AG04450 (cell line): ENCODE measurements at regions of chr3 and their contacts with region 1.

Region 1: GRCh38 chr3:128969993-128970739 is 23.7 kb downstream of the CFAP92 start:
- DNase-seq: no peak
- H3K4me3 ChIP-seq: no peak overlapping the region
- H3K27ac ChIP-seq: peak overlapping the region; percentile 21
- H3K27me3 ChIP-seq: peaks cover 14% of the 10 kb centered on the region
- CTCF ChIP-seq: peak; percentile 95

Region 2: DNA sequence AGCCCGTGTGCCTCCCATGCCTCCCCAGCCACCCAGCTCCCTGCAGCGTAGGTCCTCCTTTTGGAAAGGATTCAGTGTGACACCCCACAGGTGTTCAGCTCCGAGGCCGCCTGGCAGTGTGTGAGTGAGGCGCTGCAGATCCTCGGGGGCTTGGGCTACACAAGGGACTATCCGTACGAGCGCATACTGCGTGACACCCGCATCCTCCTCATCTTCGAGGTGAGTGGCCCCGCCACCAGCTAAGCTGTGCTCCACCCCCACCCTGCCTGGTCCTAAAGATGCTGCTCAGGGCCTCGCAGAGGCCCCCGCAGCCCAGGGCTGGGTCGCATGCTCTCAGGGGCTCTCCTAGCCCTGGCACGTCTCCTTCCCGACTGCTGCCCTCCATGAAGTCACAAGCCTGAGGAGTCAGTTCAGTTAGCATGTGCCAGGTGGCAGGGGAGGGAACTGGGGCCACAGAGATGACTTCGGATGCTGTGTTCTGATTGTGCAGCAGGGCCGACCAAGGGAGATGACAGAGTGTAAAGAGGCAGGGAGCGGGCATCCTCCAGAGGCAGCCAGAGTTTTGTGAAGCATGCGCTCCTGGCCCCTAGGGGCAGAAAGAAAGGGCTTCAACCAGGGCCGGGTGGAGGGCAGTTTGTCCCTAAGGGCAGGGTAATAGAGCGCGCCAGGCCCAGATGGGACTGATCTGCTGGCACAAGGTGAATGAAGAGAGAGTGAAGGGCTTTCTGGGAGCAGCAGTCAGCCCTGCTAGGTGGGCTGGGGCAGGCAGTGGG is 63.9 kb before region 1 on chr3:
- CTCF ChIA-PET with region 1: no interaction called
- POLR2A ChIA-PET with region 1: no interaction called
- DNase-seq: no peak
- H3K4me3 ChIP-seq: no peak overlapping the region
- H3K27ac ChIP-seq: no peak overlapping the region
- H3K27me3 ChIP-seq: no peaks in the 10 kb centered on the region
- CTCF ChIP-seq: no peak

Region 3: GRCh38 chr3:128993461-128994173 is 23.5 kb after region 1 on chr3 and contains the start of gene CFAP92:
- CTCF ChIA-PET with region 1: interaction called, 18 read pairs
- POLR2A ChIA-PET with region 1: no interaction called
- DNase-seq: no peak
- H3K4me3 ChIP-seq: peak within 1 kb of the TSS; percentile 50
- H3K27ac ChIP-seq: no peak within 1 kb of the TSS
- H3K27me3 ChIP-seq: peaks cover 46% of the 10 kb centered on the region
- CTCF ChIP-seq: no peak
- polyA plus RNA-seq, gene CFAP92: 0.10 TPM in 1 of 2 replicates, not detected in the other

Region 4: DNA sequence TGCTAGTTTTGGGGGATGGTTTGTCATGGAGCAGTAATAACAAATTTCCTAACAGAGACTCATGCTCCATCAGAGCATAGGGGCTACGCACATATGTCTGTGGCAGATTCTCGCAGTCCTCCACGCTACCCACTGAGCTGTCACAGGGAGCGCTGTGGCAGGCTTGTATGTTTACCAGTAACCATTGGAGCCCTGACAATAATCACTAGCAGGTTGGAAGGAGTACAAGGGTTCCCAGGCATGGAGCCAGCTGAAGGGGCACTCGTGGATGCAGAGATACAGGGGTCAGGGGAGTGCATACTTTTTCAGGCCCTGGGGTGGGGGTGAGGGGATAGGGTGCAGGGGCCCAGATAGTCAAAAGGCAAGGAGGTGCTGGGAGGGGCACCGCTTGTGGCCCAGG is 82.5 kb after region 1 on chr3:
- CTCF ChIA-PET with region 1: interaction called, 111 read pairs
- POLR2A ChIA-PET with region 1: interaction called, 3 read pairs
- DNase-seq: no peak
- H3K4me3 ChIP-seq: no peak overlapping the region
- H3K27ac ChIP-seq: no peak overlapping the region
- H3K27me3 ChIP-seq: peaks cover 17% of the 10 kb centered on the region
- CTCF ChIP-seq: no peak

Region 5: GRCh38 chr3:129101370-129102138 is 131.4 kb after region 1 on chr3:
- CTCF ChIA-PET with region 1: interaction called, 17 read pairs
- POLR2A ChIA-PET with region 1: no interaction called
- DNase-seq: no peak
- H3K4me3 ChIP-seq: no peak overlapping the region
- H3K27ac ChIP-seq: no peak overlapping the region
- H3K27me3 ChIP-seq: no peaks in the 10 kb centered on the region
- CTCF ChIP-seq: no peak

Region 6: GRCh38 chr3:129144786-129145185 is 174.6 kb after region 1 on chr3:
- CTCF ChIA-PET with region 1: interaction called, 28 read pairs
- POLR2A ChIA-PET with region 1: no interaction called
- DNase-seq: no peak
- H3K4me3 ChIP-seq: no peak overlapping the region
- H3K27ac ChIP-seq: no peak overlapping the region
- H3K27me3 ChIP-seq: no peaks in the 10 kb centered on the region
- CTCF ChIP-seq: no peak

Region 7: DNA sequence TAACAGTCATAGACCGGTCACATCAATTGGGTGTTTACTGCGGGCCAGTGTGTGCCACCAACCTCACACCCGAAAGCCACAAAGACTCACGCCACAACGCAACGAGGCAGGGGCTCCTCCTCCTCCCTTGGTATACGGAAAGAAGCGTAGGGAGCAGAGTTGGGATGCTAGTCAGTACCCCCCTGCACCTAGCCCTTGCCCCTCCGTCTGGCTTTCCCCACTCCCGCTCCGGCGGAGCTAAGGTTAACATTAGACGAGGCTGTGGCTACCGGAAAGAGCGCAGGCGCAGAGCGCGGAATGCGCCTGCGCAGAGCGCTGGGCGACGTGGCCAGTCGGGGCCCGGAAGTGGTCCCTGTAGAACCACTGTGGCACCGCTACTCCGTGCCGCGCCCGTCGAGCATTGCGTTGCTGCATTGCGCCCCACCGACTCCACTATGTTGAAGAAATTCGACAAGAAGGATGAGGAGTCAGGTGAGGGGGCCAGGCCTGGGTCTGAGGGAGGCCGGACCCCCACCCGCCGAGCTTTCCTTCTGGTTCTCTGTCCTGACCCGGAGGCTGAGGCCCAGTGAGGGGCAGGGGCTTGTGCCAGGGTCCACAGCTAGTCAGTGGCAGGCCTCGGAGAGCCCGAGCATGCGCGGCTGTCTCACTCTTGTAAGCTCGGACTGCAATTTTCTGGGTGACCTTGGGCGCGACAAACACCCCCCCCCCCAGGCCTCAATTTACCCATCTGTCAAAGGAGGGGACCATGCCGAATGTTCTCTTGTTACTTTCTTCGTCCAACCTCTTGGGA is 279.3 kb after region 1 on chr3 and contains the start of gene COPG1:
- CTCF ChIA-PET with region 1: interaction called, 118 read pairs
- POLR2A ChIA-PET with region 1: interaction called, 3 read pairs
- DNase-seq: peak; percentile 75
- H3K4me3 ChIP-seq: peak within 1 kb of the TSS; percentile 100
- H3K27ac ChIP-seq: peak within 1 kb of the TSS; percentile 97
- H3K27me3 ChIP-seq: no peaks in the 10 kb centered on the region
- CTCF ChIP-seq: no peak
- polyA plus RNA-seq, gene COPG1: 229 and 231 TPM in 2 replicates